Common myeloid progenitor, CD34-positive (primary cell): ENCODE measurements at regions of chr18 and their contacts with region 1.

Region 1: DNA sequence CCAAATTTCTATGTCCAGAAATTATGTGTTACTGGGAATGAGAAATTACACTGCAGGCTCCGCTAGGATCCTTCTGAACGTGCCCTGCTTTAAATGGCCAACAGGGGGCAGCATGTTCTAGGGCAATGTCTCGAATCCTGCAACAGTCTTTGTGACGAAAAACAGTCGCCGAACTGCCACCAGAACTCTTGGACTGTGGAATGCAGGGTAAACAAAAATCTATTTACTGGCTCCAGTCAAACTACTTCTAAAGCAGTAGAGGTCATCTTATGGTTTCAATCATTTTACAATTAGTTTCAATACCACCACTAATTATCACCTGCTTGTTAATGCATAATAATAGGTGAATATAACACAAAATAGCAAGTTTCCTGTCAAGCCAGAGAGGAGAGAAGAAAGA is 9.8 kb upstream of the ZNF397 start:
- DNase-seq: peak; percentile 82 to 91 (median 87)
- H3K4me3 ChIP-seq: peak overlapping the region in 5 of 7 experiments; percentile 19 to 65 (median 40)
- H3K27ac ChIP-seq: no peak overlapping the region
- H3K4me1 ChIP-seq: peaks cover 0 to 3% (median 0%) of the 10 kb centered on the region in 4 experiments
- H3K27me3 ChIP-seq: no peaks in the 10 kb centered on the region

Region 2: DNA sequence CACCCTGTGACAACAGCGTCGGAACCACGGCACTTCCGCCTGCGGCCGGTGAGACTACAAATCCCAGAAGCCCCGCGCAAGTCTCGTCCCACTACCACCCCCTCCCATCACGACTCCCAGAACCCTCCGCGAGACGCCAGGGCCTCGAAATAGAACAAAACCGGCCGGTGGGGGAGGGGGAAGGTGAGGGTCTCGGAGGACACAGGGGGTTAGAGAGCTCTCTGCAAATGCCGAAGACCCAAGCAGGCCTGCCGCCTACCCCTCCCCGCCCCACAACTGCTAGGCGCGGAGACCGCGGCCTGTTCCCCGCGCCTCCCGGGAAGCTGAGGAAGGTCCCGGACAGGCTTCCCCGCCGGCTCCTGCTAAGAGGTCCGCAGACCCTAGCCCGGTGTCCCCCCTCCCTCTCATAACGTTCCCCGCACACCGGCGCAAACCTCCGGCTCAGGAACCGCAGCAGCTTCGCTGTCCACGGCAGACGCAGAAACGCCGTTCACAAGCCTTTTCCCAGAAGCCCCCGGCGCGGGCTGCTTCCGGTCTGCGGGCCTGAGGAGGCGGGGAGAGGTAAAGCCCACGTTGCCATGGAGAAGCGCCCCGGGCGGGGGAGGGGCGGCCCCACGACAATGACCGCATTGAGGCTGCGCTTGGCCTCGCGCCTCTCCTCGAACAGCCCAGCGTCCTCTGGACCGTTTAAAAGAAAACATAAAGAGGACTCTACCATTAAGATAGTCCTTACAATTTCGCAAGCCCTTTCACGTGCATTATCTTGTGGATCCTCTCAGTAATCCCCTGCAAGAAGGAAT is 113.1 kb after region 1 on chr18 and contains the start of gene ZNF24:
- CTCF ChIA-PET with region 1: interaction called, 33 read pairs
- POLR2A ChIA-PET with region 1: no interaction called
- DNase-seq: peak; percentile 93 to 97 (median 97)
- H3K4me3 ChIP-seq: peak within 1 kb of the TSS; percentile 62 to 94 (median 83)
- H3K27ac ChIP-seq: peak within 1 kb of the TSS; percentile 99
- H3K4me1 ChIP-seq: peaks cover 8 to 21% (median 17%) of the 10 kb centered on the region in 4 experiments
- H3K27me3 ChIP-seq: no peaks in the 10 kb centered on the region

Region 3: GRCh38 chr18:35355140-35355618 is 124.1 kb after region 1 on chr18:
- CTCF ChIA-PET with region 1: interaction called, 44 read pairs
- POLR2A ChIA-PET with region 1: no interaction called
- DNase-seq: peak; percentile 90 to 96 (median 93)
- H3K4me3 ChIP-seq: peak overlapping the region in 1 of 7 experiments; percentile 38
- H3K27ac ChIP-seq: no peak overlapping the region
- H3K4me1 ChIP-seq: peaks cover 0 to 2% (median 0%) of the 10 kb centered on the region in 4 experiments
- H3K27me3 ChIP-seq: no peaks in the 10 kb centered on the region

Region 4: GRCh38 chr18:35386600-35387351 is 155.7 kb after region 1 on chr18:
- CTCF ChIA-PET with region 1: interaction called, 16 read pairs
- POLR2A ChIA-PET with region 1: no interaction called
- DNase-seq: peak; percentile 86 to 95 (median 91)
- H3K4me3 ChIP-seq: no peak overlapping the region
- H3K27ac ChIP-seq: no peak overlapping the region
- H3K4me1 ChIP-seq: peaks cover 0 to 4% (median 2%) of the 10 kb centered on the region in 4 experiments
- H3K27me3 ChIP-seq: peaks cover 0 to 3% (median 0%) of the 10 kb centered on the region in 5 experiments